AG04450 (cell line): ENCODE measurements at regions of chr17 and their contacts with region 1.

Region 1: GRCh38 chr17:4263282-4264215 is at the start of gene ANKFY1:
- DNase-seq: peak; percentile 85
- H3K4me3 ChIP-seq: peak within 1 kb of the TSS; percentile 94
- H3K27ac ChIP-seq: peak within 1 kb of the TSS; percentile 68
- H3K27me3 ChIP-seq: no peaks in the 10 kb centered on the region
- CTCF ChIP-seq: peak; percentile 9; the same call in 1 of the 2 replicates
- polyA plus RNA-seq, gene ANKFY1: 38.8 and 42.8 TPM in 2 replicates

Region 2: GRCh38 chr17:4110152-4110551 is 153.4 kb before region 1 on chr17:
- CTCF ChIA-PET with region 1: no interaction called
- POLR2A ChIA-PET with region 1: no interaction called
- DNase-seq: no peak
- H3K4me3 ChIP-seq: no peak overlapping the region
- H3K27ac ChIP-seq: peak overlapping the region; percentile 34
- H3K27me3 ChIP-seq: no peaks in the 10 kb centered on the region
- CTCF ChIP-seq: no peak

Region 3: DNA sequence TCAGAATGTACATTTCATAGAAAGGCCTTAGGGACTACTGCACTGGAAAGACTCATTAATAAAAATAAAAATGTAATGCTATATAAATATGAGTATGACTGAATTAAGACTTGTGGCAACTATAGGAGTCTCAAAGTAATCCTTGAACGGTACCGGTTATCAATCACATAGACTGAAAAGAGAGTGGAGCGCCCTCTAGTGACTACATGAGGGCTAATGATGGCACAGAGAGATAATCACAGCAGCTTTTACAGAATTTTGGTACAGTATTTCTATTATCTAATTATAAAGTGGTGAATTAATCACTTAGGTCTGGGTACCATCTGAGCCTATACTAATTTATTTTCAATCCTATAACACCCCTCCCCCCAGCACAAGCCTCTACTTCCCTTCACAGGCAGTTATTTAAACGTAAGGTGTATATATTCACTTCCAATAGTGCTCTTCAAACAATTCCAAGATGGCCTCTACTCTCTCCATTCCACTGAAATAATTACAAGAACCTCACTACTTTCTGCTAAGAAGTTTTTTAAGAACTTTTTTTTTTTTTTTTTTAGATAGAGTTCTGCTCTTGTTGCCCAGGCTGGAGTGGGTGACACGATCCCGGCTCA is 41.0 kb after region 1 on chr17:
- CTCF ChIA-PET with region 1: interaction called, 10 read pairs
- POLR2A ChIA-PET with region 1: no interaction called
- DNase-seq: no peak
- H3K4me3 ChIP-seq: no peak overlapping the region
- H3K27ac ChIP-seq: no peak overlapping the region
- H3K27me3 ChIP-seq: no peaks in the 10 kb centered on the region
- CTCF ChIP-seq: peak; percentile 75

Region 4: DNA sequence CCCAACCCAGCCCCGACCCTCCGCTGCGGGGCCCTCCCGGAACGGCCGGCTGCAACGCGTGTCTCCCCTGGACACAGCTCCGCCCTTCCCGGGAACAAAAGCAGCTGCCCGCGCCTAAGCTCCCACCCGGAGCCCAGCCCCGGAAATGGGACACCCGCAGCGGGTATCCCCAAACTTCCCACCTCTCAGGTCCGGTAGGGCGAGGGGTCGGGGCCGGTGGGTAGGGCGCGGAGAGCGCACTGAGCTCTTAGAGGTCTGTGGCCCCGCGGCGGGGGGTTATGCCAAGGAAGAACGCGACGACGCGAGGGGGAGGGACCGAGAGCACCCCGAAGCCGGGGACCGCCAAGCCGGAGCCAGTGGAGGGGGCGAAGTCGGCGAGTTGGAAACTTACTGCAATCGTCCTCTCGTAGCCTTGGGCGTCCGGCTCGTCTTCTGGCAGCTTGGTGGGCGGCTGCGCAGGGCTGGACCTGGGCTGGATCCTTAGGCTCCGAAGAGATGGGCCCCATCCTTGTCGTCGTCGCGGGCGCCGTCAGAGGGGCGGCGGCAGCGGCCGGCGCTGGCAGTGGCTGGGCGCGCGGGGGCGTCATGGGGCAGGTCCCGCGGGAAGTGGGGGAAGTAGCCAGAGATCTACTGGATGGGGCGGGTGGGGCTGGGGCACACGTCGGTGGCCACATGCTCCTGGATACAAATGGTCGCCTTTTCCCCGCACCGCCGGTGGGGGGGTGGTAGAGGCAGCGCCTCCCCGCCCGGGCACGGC is 859.2 kb after region 1 on chr17:
- CTCF ChIA-PET with region 1: no interaction called
- POLR2A ChIA-PET with region 1: interaction called, 18 read pairs
- DNase-seq: no peak
- H3K4me3 ChIP-seq: peak overlapping the region; percentile 56
- H3K27ac ChIP-seq: no peak overlapping the region
- H3K27me3 ChIP-seq: peaks cover 14% of the 10 kb centered on the region
- CTCF ChIP-seq: no peak